ENCODE measurements at regions of chr18 and their contacts with region 1.

Region 1: GRCh38 chr18:49728542-49728941 is 84.8 kb downstream of the ACAA2 start:
- DNase-seq: peak; percentile 16 to 45
- ATAC-seq: no peak
- H3K4me3 ChIP-seq: no peak overlapping the region
- H3K27ac ChIP-seq: peak overlapping the region in 2 of 10 donors; percentile 58 to 65
- H3K4me1 ChIP-seq: peaks cover 0 to 31% (median 8%) of the 10 kb centered on the region in 9 donors
- H3K27me3 ChIP-seq: peaks cover 0 to 6% (median 0%) of the 10 kb centered on the region in 7 donors
- CTCF ChIP-seq: peak; percentile 13 to 71 (median 51)

Region 2: GRCh38 chr18:49561289-49562193 is 167.0 kb before region 1 on chr18 and contains the start of gene LIPG:
- intact Hi-C with region 1: loop called in 2 of 10 experiments (anchors 2 to 10 kb)
- DNase-seq: no peak
- ATAC-seq: peak in 7 of 8 donors; percentile 29 to 63 (median 40)
- H3K4me3 ChIP-seq: peak within 1 kb of the TSS; percentile 15 to 57 (median 44)
- H3K27ac ChIP-seq: peak within 1 kb of the TSS in 1 of 10 donors; percentile 44
- H3K4me1 ChIP-seq: peaks cover 9 to 45% (median 26%) of the 10 kb centered on the region in 9 donors
- H3K27me3 ChIP-seq: peaks cover 0 to 77% (median 55%) of the 10 kb centered on the region in 7 donors
- CTCF ChIP-seq: no peak
- total RNA-seq, gene LIPG: 0.12 to 14.0 (median 0.42) TPM in 7 of 10 donors, not detected in the others

Region 3: DNA sequence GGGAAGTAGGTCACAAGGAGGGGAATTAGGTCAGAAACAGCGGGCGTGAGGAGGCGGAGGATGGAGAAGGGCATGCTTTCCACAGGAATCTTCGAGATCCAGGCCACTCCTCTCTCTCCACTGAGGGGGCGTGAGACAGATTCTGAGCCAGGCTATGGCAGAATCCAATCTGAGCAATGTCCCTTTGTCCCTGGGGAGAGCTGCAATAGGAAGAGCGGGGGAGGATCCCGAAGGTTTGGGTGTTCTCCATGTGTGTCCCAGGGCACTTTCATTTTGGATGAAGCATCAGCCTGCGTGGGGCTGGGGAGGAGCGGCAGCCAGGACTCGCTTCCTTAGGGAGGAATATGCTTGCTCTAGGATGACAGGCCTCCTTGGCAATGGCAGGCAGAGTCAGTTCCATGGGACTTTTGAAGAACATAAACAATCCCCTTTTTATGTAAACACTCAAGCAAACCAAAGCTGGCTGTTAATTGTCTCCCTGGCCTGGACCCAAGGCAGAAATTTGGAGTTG is 82.6 kb before region 1 on chr18:
- intact Hi-C with region 1: loop called in 1 of 10 experiments (anchors 5 kb)
- DNase-seq: peak; percentile 65 to 77
- ATAC-seq: peak; percentile 85 to 90 (median 87)
- H3K4me3 ChIP-seq: no peak overlapping the region
- H3K27ac ChIP-seq: peak overlapping the region in 4 of 10 donors; percentile 1 to 50 (median 48)
- H3K4me1 ChIP-seq: peaks cover 0 to 34% (median 8%) of the 10 kb centered on the region in 9 donors
- H3K27me3 ChIP-seq: peaks cover 0 to 9% (median 0%) of the 10 kb centered on the region in 7 donors
- CTCF ChIP-seq: no peak

Region 4: GRCh38 chr18:49663899-49664890 is 64.3 kb before region 1 on chr18:
- intact Hi-C with region 1: no loop called
- DNase-seq: peak; percentile 45 to 67
- ATAC-seq: peak; percentile 36 to 78 (median 58)
- H3K4me3 ChIP-seq: no peak overlapping the region
- H3K27ac ChIP-seq: peak overlapping the region in 8 of 10 donors; percentile 1 to 68 (median 49)
- H3K4me1 ChIP-seq: peaks cover 0 to 51% (median 20%) of the 10 kb centered on the region in 9 donors
- H3K27me3 ChIP-seq: peaks cover 0 to 21% (median 13%) of the 10 kb centered on the region in 7 donors
- CTCF ChIP-seq: no peak

Region 5: GRCh38 chr18:49967171-49967570 is 238.6 kb after region 1 on chr18:
- intact Hi-C with region 1: no loop called
- DNase-seq: no peak
- ATAC-seq: no peak
- H3K4me3 ChIP-seq: no peak overlapping the region
- H3K27ac ChIP-seq: no peak overlapping the region
- H3K4me1 ChIP-seq: no peaks in the 10 kb centered on the region
- H3K27me3 ChIP-seq: peaks cover 0 to 10% (median 0%) of the 10 kb centered on the region in 7 donors
- CTCF ChIP-seq: no peak